CD4-positive, alpha-beta memory T cell (primary cell): ENCODE measurements at regions of chr11 and their contacts with region 1.

Region 1: DNA sequence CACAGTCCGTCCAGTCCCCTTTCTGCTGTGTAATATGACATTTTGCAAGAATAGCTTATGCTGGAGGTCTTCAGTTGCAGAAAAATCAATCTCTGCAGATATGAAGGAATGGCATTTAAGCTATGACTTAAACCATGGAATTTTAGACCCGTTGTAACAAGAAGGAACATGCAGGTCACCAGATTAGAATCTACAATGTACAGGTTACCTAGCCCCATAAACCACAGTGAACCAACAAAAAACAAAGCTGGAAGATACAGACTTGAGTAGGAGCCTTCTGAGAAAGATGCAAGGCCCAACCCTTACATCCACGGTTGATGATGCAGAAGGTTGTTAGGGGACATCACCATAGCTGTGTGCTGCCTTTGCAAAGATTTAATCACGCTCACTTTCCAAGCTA is 132.5 kb downstream of the WT1 start:
- DNase-seq: no peak
- H3K4me3 ChIP-seq: no peak overlapping the region
- H3K4me3 Mint-ChIP-seq: no peak overlapping the region
- H3K27ac ChIP-seq: no peak overlapping the region
- H3K27ac Mint-ChIP-seq: no peak overlapping the region
- H3K4me1 ChIP-seq: no peaks in the 10 kb centered on the region
- H3K4me1 Mint-ChIP-seq: no peaks in the 10 kb centered on the region
- H3K27me3 ChIP-seq: no peaks in the 10 kb centered on the region
- H3K27me3 Mint-ChIP-seq: peaks cover 0 to 4% of the 10 kb centered on the region in 2 donors

Region 2: DNA sequence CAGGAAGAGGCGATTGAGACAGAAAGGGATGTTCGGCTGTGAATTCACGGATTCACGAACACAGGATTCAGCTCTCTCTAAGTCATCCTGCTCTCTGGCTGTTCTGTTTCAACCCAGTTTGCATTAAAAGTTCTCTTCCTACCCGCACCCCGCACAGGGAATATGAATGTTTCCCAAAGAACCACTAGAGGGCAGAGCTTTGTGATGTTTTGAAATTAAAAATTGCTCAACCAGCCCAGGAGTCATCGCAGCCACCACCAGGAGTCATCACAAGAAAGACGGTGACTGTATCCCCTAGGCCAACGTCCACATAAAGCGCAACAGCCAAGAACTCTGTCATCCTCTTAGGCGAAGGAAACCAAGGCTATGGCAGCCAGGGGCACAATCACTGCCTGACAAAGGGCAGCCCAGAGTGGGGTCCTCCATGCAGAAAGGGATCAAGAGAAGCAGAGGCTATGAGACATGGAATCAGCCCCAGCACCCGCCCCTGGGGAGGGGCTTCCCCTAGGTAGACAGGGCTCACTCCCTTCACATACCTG is 10.1 kb after region 1 on chr11:
- CTCF ChIA-PET with region 1: interaction called, 14 read pairs
- POLR2A ChIA-PET with region 1: no interaction called
- intact Hi-C with region 1: no loop called
- DNase-seq: peak in 1 of 5 donors; percentile 7
- H3K4me3 ChIP-seq: no peak overlapping the region
- H3K4me3 Mint-ChIP-seq: no peak overlapping the region
- H3K27ac ChIP-seq: no peak overlapping the region
- H3K27ac Mint-ChIP-seq: no peak overlapping the region
- H3K4me1 ChIP-seq: no peaks in the 10 kb centered on the region
- H3K4me1 Mint-ChIP-seq: peaks cover 0 to 7% (median 5%) of the 10 kb centered on the region in 4 donors
- H3K27me3 ChIP-seq: no peaks in the 10 kb centered on the region
- H3K27me3 Mint-ChIP-seq: peaks cover 2 to 7% of the 10 kb centered on the region in 2 donors